Activated CD4-positive, alpha-beta T cell treated with anti-CD3 and anti-CD28 coated beads, Interleukin-2, amount 10 ng/mL, durations not matched to agents 24 days and 14 days (primary cell): ENCODE measurements at regions of chr20 and their contacts with region 1.

Region 1: GRCh38 chr20:63657937-63658748 is at the start of gene RTEL1:
- DNase-seq: peak; percentile 98
- H3K4me3 Mint-ChIP-seq: peak within 1 kb of the TSS; percentile 93
- H3K27ac Mint-ChIP-seq: peak within 1 kb of the TSS; percentile 89
- H3K4me1 Mint-ChIP-seq: peaks cover 34% of the 10 kb centered on the region
- H3K27me3 Mint-ChIP-seq: peaks cover 2% of the 10 kb centered on the region
- total RNA-seq, gene RTEL1: 60.7 and 64.7 TPM in 2 replicates

Region 2: DNA sequence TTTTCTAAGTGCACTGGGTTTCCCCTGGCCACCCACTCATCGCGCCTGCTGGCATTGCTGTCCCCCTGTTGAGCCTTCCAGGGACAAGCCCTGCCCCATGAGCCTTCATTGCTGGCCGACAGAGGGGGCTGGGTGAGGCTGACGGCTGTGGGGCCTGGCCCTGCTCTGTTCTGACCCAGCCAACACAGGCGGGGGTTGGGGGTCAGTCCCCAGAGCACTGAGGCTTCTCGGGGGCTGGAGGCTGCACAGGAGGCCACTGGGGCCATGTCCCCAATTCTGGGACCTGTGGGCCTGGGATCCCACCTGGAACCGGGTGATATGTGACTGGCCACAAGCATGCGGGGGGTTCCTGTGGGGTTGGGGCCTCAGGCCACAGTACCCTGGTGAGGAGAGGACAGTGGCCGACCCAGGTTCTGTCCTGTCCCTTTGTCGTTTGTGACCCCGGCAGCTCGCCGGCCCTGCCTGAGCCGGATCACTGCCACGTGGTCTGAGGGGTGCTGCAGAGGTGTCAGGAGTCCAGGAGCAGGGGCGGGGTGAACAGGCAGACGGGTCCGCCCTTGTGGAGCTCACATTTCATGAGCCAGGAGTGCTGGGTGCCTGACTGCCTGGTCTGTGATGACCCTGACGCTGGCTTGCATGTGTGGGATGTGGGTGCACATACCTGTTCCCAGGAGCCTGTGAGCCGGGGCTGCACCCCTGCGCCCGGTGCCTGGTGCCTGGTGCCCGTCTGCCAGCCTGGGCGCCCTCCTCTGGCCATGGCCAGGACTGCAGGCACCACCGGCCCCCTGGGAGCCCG is 367.3 kb before region 1 on chr20:
- intact Hi-C with region 1: no loop called
- DNase-seq: peak; percentile 89
- H3K4me3 Mint-ChIP-seq: no peak overlapping the region
- H3K27ac Mint-ChIP-seq: no peak overlapping the region
- H3K4me1 Mint-ChIP-seq: peaks cover 2% of the 10 kb centered on the region
- H3K27me3 Mint-ChIP-seq: peaks cover 3% of the 10 kb centered on the region

Region 3: GRCh38 chr20:63645218-63645617 is 12.9 kb before region 1 on chr20:
- intact Hi-C with region 1: loop called (anchors 1 kb)
- DNase-seq: no peak
- H3K4me3 Mint-ChIP-seq: no peak overlapping the region
- H3K27ac Mint-ChIP-seq: no peak overlapping the region
- H3K4me1 Mint-ChIP-seq: peaks cover 2% of the 10 kb centered on the region
- H3K27me3 Mint-ChIP-seq: peaks cover 6% of the 10 kb centered on the region

Region 4: DNA sequence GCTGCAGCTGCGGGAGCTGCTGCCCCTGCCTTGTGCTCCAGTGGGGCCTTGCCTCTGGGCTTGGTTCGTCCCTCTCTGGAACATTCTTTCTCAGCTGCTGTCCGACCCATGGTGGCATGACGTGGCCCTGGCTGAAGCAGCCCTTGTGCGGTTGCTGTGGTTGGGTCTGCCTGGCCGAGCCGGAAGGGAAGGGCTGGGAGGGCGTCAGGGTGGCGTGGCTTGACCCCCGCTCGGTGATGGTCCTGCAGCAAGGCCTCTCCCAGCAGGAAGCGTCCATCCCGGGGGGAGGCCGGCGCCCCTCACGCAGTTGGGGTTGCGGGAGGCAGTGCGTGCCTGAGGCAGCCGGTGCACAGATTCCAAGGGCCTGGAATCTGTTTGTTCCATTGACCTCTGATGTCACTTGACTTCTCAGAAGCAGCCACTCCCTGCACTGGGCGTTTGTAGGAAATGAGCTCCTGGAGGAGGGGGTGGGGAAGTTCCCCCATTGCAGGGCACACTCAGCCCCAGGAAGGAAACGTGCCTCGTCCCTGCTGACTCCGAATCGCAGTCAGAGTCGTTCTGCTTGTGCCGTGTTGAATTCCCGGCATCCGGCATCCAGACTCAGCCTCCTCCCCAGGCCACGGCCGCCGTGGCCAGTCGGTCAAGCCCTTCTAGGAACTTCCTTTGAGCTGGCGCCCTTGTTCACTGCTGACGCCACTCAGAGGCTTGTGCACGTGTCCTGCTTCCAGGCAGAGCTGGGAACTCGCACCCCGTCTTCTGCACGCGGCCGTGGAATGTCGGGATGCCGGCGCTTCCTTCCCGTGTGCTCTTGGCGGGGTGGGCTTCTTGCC is 28.6 kb after region 1 on chr20:
- intact Hi-C with region 1: no loop called
- DNase-seq: peak; percentile 74
- H3K4me3 Mint-ChIP-seq: no peak overlapping the region
- H3K27ac Mint-ChIP-seq: peak overlapping the region; percentile 73
- H3K4me1 Mint-ChIP-seq: peaks cover 7% of the 10 kb centered on the region
- H3K27me3 Mint-ChIP-seq: no peaks in the 10 kb centered on the region

Region 5: DNA sequence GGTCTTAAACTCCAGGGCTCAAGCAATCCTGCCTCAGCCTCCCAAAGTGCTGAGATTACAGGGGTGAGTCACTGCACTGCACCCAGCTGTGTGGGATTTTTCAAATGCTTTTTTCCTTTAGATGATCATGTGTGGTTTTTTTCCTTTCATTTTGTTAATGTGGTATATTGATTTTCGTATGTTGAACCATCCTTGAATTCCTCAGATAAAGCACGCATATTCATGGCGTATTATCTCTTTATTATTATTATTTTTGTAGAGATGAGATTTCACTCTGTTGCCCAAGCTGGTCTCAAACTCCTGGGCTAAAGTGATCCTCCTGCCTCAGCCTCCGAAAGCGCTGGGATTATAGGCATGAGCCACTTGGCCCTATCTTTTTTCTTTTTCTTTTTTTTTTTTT is 56.7 kb after region 1 on chr20:
- intact Hi-C with region 1: no loop called
- DNase-seq: no peak
- H3K4me3 Mint-ChIP-seq: no peak overlapping the region
- H3K27ac Mint-ChIP-seq: no peak overlapping the region
- H3K4me1 Mint-ChIP-seq: peaks cover 19% of the 10 kb centered on the region
- H3K27me3 Mint-ChIP-seq: no peaks in the 10 kb centered on the region

Region 6: DNA sequence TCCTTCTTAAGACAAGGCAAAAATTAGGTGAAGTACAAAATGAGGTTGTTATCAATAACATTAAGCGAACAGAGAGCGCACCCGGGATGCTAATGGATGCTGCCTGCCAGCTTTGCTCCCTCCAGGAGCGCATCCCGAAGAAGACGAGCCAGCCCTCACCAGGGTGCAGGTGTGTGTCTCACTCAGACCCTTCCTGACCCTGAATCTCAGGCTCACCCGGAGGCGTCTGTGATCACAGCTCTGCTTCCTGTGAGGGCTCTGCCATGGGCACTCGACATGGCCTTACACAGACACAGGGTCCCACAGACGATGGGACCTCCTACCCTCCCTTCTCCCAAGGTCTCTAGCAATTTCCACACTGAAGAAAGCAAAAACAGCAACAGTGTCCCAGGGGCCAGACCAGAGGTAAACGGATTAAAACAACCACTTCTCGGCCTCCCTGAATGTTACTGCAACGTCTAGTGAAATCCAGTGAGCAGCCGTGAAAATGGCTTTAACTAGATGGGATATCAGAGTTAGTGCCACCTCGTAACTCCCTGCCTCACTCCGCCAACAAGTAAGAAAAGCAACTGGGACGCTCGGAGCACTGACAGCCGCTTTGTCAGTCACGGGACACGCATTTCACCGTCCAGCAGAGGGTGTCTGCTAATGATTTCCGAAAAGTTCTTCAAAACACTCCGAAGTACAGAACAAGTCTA is 161.2 kb after region 1 on chr20:
- intact Hi-C with region 1: no loop called
- DNase-seq: no peak
- H3K4me3 Mint-ChIP-seq: no peak overlapping the region
- H3K27ac Mint-ChIP-seq: no peak overlapping the region
- H3K4me1 Mint-ChIP-seq: no peaks in the 10 kb centered on the region
- H3K27me3 Mint-ChIP-seq: peaks cover 7% of the 10 kb centered on the region